CD8-positive, alpha-beta memory T cell (primary cell): ENCODE measurements at regions of chr1 and their contacts with region 1.

Region 1: DNA sequence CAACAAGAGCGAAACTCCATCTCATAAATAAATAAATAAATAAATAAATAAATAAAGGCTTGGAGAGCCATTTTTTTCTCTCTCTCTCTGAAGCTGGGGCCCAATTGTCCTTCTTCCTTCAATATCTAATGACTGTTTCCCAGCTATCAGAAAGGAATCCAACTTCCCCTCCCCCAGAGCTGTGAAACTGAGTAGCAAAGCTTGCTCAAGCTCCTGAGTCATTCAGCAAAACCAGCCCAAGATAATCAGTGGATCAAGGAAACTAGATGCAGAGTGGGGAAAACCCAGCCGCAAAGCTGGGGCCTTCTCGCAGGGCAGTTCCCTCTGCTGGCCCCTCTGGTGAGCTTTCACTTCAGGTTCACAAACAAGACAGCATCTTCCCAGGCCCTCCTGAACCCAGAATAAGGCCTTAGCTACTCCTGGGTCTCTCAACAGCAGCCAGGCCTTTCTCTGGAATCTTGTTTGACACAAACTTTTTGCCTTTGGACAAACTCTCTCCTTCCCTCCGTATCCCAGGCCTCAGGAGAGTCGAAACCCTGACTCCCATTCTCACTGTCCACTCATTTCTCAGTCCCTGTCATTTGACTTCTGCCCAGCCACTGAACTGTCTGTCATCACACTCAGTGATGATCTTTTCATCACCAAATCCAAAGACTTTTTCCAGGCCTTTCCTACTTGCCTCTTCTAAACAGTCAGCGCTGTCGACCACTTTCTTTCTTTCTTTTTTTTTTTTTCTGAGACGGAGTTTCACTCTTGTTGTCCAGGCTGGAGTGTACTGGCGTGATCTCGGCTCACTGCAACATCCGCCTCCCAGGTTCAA is 18.0 kb upstream of the PTP4A2 start:
- DNase-seq: peak; percentile 32 to 87 (median 69)
- H3K4me3 ChIP-seq: peak overlapping the region; percentile 0
- H3K4me3 Mint-ChIP-seq: peak overlapping the region; percentile 16 to 75 (median 57)
- H3K27ac ChIP-seq: peak overlapping the region; percentile 56
- H3K27ac Mint-ChIP-seq: peak overlapping the region; percentile 68 to 94 (median 91)
- H3K4me1 ChIP-seq: peaks cover 45% of the 10 kb centered on the region
- H3K4me1 Mint-ChIP-seq: peaks cover 43 to 84% (median 72%) of the 10 kb centered on the region in 3 donors
- H3K27me3 ChIP-seq: no peaks in the 10 kb centered on the region
- H3K27me3 Mint-ChIP-seq: no peaks in the 10 kb centered on the region

Region 2: DNA sequence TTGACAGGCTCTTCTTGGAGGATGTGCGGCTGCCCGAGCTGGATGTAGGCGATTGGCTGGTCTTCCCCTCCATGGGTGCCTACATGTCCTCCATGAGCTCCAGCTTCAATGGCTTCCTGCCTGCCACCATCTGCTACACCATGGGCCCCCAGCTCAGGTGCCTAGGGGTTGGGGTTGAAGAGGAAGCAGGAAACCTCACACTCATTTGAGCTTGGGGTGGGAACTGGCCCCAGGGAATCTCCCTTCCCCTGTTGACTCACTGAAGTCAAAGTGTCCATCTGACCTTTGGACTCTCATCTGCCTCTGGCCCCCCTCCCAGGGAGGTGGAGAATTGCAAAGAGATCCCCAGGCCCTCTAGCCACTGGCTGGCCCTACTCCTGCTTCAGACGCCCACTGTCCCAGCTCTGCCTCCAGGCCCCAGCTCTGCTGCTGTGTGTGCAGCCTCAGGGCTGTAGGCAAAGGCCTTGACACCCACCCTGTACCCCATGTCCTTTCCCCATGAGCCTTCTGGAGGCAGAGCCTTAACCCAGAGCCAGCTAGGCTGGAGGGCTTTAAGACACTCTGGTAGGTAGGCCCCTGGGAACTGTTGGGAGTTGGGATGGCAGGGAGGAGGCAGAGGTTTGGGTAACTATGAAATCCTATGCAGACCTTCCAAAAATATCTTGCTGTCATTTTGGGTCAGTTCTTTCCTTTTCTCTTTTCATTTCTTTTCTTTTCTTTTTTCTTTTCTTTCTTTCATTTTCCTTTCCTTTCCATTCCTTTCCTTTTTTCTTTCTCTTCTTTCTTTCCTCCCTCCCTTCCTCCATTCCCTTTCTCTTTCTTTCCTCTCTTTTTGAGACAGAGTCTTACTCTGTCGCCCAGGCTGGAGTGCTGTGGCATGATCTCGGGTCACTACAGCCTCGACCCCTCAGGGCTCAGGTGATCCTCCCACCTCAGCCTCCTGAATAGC is 446.7 kb before region 1 on chr1:
- CTCF ChIA-PET with region 1: no interaction called
- POLR2A ChIA-PET with region 1: no interaction called
- DNase-seq: no peak
- H3K4me3 ChIP-seq: no peak overlapping the region
- H3K4me3 Mint-ChIP-seq: no peak overlapping the region
- H3K27ac ChIP-seq: no peak overlapping the region
- H3K27ac Mint-ChIP-seq: no peak overlapping the region
- H3K4me1 ChIP-seq: peaks cover 7% of the 10 kb centered on the region
- H3K4me1 Mint-ChIP-seq: peaks cover 7 to 11% (median 8%) of the 10 kb centered on the region in 3 donors
- H3K27me3 ChIP-seq: no peaks in the 10 kb centered on the region
- H3K27me3 Mint-ChIP-seq: peaks cover 18 to 31% of the 10 kb centered on the region in 2 donors

Region 3: GRCh38 chr1:31815752-31816500 is 140.2 kb before region 1 on chr1 and contains the start of gene SPOCD1:
- CTCF ChIA-PET with region 1: interaction called, 61 read pairs
- POLR2A ChIA-PET with region 1: no interaction called
- DNase-seq: peak; percentile 70 to 86 (median 78)
- H3K4me3 ChIP-seq: no peak within 1 kb of the TSS
- H3K4me3 Mint-ChIP-seq: peak within 1 kb of the TSS in 2 of 7 donors; percentile 23 to 71
- H3K27ac ChIP-seq: no peak within 1 kb of the TSS
- H3K27ac Mint-ChIP-seq: peak within 1 kb of the TSS in 4 of 8 donors; percentile 29 to 87 (median 56)
- H3K4me1 ChIP-seq: peaks cover 6% of the 10 kb centered on the region
- H3K4me1 Mint-ChIP-seq: peaks cover 6 to 17% (median 11%) of the 10 kb centered on the region in 3 donors
- H3K27me3 ChIP-seq: no peaks in the 10 kb centered on the region
- H3K27me3 Mint-ChIP-seq: no peaks in the 10 kb centered on the region
- total RNA-seq, gene SPOCD1: 0.18 TPM in 1 of 2 experiments, not detected in the other

Region 4: GRCh38 chr1:31938174-31938950 is 17.8 kb before region 1 on chr1 and contains the start of gene PTP4A2:
- CTCF ChIA-PET with region 1: interaction called, 136 read pairs
- POLR2A ChIA-PET with region 1: interaction called, 35 read pairs
- DNase-seq: peak; percentile 75 to 85 (median 80)
- H3K4me3 ChIP-seq: peak within 1 kb of the TSS; percentile 83
- H3K4me3 Mint-ChIP-seq: peak within 1 kb of the TSS; percentile 86 to 100 (median 97)
- H3K27ac ChIP-seq: peak within 1 kb of the TSS; percentile 77
- H3K27ac Mint-ChIP-seq: peak within 1 kb of the TSS; percentile 90 to 99 (median 96)
- H3K4me1 ChIP-seq: peaks cover 77% of the 10 kb centered on the region
- H3K4me1 Mint-ChIP-seq: peaks cover 72 to 79% (median 75%) of the 10 kb centered on the region in 3 donors
- H3K27me3 ChIP-seq: no peaks in the 10 kb centered on the region
- H3K27me3 Mint-ChIP-seq: no peaks in the 10 kb centered on the region
- total RNA-seq, gene PTP4A2: 339 to 368 TPM

Region 5: GRCh38 chr1:31944205-31945089 is 11.7 kb before region 1 on chr1:
- CTCF ChIA-PET with region 1: interaction called, 136 read pairs
- POLR2A ChIA-PET with region 1: interaction called, 35 read pairs
- DNase-seq: peak; percentile 66 to 90 (median 77)
- H3K4me3 ChIP-seq: peak overlapping the region; percentile 68
- H3K4me3 Mint-ChIP-seq: peak overlapping the region; percentile 83 to 91 (median 85)
- H3K27ac ChIP-seq: peak overlapping the region; percentile 91
- H3K27ac Mint-ChIP-seq: peak overlapping the region; percentile 82 to 95 (median 92)
- H3K4me1 ChIP-seq: peaks cover 58% of the 10 kb centered on the region
- H3K4me1 Mint-ChIP-seq: peaks cover 46 to 67% (median 60%) of the 10 kb centered on the region in 3 donors
- H3K27me3 ChIP-seq: no peaks in the 10 kb centered on the region
- H3K27me3 Mint-ChIP-seq: no peaks in the 10 kb centered on the region